Thyroid gland (tissue), 4 donors: ENCODE measurements at regions of chr11 and their contacts with region 1.

Region 1: GRCh38 chr11:22625448-22626287 is at the start of gene FANCF:
- DNase-seq: peak; percentile 93 to 94
- H3K4me3 ChIP-seq: peak within 1 kb of the TSS; percentile 57 to 66 (median 63)
- H3K27ac ChIP-seq: peak within 1 kb of the TSS; percentile 83 to 88 (median 85)
- H3K4me1 ChIP-seq: peaks cover 10 to 15% of the 10 kb centered on the region in 2 donors
- H3K27me3 ChIP-seq: no peaks in the 10 kb centered on the region
- CTCF ChIP-seq: peak in 2 of 6 experiments; percentile 3 to 6
- POLR2A ChIP-seq: peak in 1 of 2 donors; percentile 60
- total RNA-seq, gene FANCF: 8.6 to 15.2 (median 13.4) TPM

Region 2: DNA sequence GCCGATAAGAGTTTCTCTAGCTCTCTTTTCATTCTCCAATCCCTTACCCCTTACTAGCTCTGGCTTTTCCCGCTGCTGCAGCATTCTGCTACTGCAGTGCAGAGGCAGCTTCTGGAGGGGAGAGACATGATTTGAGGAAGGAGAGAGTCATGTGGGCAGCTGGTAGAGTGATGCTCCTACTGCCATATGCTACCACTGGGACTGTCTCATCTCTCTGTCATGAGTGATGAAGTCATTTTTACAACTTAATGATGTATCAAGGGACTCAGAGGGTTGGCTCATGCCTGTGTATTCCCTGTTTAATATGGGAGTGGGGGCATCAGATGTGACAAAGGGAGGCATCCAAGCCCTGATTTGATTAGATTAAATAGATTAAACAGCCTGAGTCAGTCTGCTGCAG is 276.2 kb before region 1 on chr11:
- intact Hi-C with region 1: no loop called
- DNase-seq: no peak
- H3K4me3 ChIP-seq: no peak overlapping the region
- H3K27ac ChIP-seq: no peak overlapping the region
- H3K4me1 ChIP-seq: no peaks in the 10 kb centered on the region
- H3K27me3 ChIP-seq: no peaks in the 10 kb centered on the region
- CTCF ChIP-seq: no peak
- POLR2A ChIP-seq: no peak

Region 3: DNA sequence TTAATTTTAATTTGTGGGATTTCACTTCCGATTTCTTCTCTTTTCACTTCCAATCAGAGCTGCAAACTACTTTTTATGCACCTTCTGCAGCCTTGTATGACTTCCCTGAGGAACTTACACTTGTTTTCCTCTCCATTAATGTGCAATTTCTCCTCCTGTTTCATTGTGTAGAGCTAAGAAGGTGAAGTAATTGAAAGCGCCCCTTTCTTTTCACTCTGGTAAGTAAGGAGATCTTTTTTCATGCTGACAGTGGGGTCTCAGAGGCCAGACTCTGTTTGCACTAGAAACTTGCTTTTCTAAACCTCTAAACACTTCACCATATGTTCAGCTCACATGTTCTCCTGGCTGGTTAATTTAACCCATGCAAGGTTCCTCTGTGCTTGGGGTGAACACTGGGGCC is 117.0 kb before region 1 on chr11:
- intact Hi-C with region 1: no loop called
- DNase-seq: no peak
- H3K4me3 ChIP-seq: no peak overlapping the region
- H3K27ac ChIP-seq: no peak overlapping the region
- H3K4me1 ChIP-seq: no peaks in the 10 kb centered on the region
- H3K27me3 ChIP-seq: no peaks in the 10 kb centered on the region
- CTCF ChIP-seq: no peak
- POLR2A ChIP-seq: no peak

Region 4: DNA sequence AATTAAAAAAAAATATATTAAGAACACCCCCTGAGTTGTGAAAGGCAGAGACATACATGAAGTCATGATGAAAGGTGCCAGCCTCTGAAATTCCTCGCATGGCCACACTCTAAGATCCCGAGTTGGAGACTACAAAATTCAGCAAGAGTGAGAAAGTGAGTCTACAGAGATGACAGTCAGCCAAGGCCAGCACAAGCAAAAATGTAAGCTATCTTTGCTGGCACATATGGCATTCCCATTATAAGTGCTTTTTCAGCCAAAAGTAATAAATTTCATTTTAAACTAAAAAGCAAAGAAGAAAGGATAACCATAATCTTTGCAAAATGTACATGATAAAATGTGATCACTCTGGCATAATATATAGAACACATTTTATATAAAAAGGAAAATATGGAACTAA is 40.7 kb before region 1 on chr11:
- intact Hi-C with region 1: no loop called
- DNase-seq: no peak
- H3K4me3 ChIP-seq: no peak overlapping the region
- H3K27ac ChIP-seq: no peak overlapping the region
- H3K4me1 ChIP-seq: no peaks in the 10 kb centered on the region
- H3K27me3 ChIP-seq: no peaks in the 10 kb centered on the region
- CTCF ChIP-seq: no peak
- POLR2A ChIP-seq: no peak

Region 5: GRCh38 chr11:22829231-22830081 is 203.8 kb after region 1 on chr11 and contains the start of gene SVIP:
- intact Hi-C with region 1: loop called (anchors 10 kb)
- DNase-seq: peak; percentile 96 to 98
- H3K4me3 ChIP-seq: peak within 1 kb of the TSS; percentile 53 to 88 (median 80)
- H3K27ac ChIP-seq: peak within 1 kb of the TSS; percentile 81 to 97 (median 94)
- H3K4me1 ChIP-seq: peaks cover 7% of the 10 kb centered on the region in 2 donors
- H3K27me3 ChIP-seq: no peaks in the 10 kb centered on the region
- CTCF ChIP-seq: peak in 4 of 6 experiments; percentile 34 to 67 (median 50)
- POLR2A ChIP-seq: peak in 1 of 2 donors; percentile 89
- total RNA-seq, gene SVIP: 20.4 to 30.6 (median 29.2) TPM